Psoas muscle (tissue), 8 donors: ENCODE measurements at regions of chr3 and their contacts with region 1.

Region 1: DNA sequence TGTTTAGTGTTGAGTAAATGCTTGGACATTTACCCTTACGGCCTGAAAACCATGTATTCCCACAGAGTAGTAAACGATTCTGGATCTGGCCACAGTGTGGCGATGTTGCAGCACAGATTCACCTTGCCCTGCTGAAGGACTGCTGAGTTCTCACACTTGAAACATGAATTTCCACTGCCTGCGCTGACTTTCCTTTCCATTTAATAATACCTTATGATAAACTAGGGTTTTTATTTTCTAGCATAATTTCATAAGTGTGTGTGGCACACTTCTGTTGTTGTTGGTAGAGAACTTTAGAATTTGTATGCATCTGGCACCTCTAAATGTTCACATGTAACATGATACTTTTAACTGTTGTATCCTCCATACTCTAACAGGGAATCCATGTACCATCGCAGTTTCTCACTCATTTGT is 53.9 kb downstream of the C3orf38 start:
- DNase-seq: peak; percentile 42 to 73
- ATAC-seq: peak; percentile 74 to 92 (median 81)
- H3K4me3 ChIP-seq: no peak overlapping the region
- H3K27ac ChIP-seq: no peak overlapping the region
- H3K4me1 ChIP-seq: no peaks in the 10 kb centered on the region
- H3K27me3 ChIP-seq: no peaks in the 10 kb centered on the region
- CTCF ChIP-seq: peak; percentile 77

Region 2: GRCh38 chr3:87855616-87856015 is 348.0 kb before region 1 on chr3:
- intact Hi-C with region 1: no loop called
- DNase-seq: no peak
- ATAC-seq: no peak
- H3K4me3 ChIP-seq: no peak overlapping the region
- H3K27ac ChIP-seq: no peak overlapping the region
- H3K4me1 ChIP-seq: no peaks in the 10 kb centered on the region
- H3K27me3 ChIP-seq: no peaks in the 10 kb centered on the region
- CTCF ChIP-seq: no peak

Region 3: DNA sequence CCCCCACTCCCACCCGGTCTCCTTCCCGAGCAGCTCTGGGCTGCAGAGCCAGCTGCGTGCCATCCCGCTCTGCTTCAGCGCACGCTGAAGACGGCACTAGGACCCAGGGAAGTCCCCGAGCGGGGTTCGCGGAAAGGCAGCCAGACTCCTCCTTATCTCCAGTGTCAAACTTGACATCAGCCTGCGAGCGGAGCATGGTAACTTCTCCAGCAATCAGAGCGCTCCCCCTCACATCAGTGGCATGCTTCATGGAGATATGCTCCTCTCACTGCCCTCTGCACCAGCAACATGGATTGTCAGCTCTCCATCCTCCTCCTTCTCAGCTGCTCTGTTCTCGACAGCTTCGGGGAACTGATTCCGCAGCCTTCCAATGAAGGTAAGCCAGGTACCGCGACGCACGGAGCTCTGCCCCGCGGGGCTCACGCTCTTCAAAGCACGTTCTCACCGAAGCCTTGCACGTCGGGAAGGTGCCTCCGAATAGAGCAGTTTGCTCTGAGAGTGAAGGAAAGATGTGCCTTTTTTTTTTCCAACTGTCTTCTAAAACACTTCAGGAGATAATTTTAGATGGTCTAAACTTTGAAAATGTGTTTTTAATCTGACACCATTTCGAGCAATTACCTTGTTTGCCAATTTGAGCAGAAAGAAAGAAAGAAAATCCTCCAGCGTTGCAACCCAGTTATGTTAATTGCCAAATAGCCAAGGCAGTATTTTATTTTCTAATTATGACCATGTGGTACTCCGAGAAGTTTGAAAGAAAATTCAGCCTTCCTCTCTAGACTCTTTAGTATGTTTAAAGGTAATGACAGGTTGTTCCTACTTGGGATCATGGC is 904.0 kb after region 1 on chr3 and contains the start of gene EPHA3:
- intact Hi-C with region 1: loop called (anchors 10 kb)
- DNase-seq: peak; percentile 57 to 85
- ATAC-seq: peak; percentile 15 to 79 (median 62)
- H3K4me3 ChIP-seq: peak within 1 kb of the TSS; percentile 59
- H3K27ac ChIP-seq: no peak within 1 kb of the TSS
- H3K4me1 ChIP-seq: no peaks in the 10 kb centered on the region
- H3K27me3 ChIP-seq: peaks cover 0 to 21% (median 3%) of the 10 kb centered on the region in 3 donors
- CTCF ChIP-seq: no peak
- total RNA-seq, gene EPHA3: 0.40 to 2.4 (median 1.1) TPM

Region 4: DNA sequence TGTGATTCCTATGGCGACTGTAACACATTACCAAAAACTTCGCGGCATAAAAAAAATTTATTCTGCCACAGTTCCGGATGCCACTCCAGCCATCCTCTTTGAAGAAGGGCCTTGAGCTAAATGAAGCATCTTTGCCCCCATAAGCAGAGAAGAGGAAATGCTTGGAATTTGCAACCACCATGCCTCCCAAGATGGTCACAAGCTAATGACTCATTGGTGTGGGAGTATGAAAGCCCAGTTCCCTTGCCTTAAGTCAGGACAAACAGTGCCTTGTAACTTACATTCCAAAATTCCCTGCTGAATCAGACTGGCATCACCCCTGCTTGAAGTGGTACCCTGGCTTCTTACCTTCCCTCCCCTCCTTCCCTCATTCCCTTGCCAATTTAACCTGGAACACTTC is 1981.2 kb after region 1 on chr3:
- intact Hi-C with region 1: loop called (anchors 5 to 10 kb)
- DNase-seq: no peak
- ATAC-seq: no peak
- H3K4me3 ChIP-seq: no peak overlapping the region
- H3K27ac ChIP-seq: no peak overlapping the region
- H3K4me1 ChIP-seq: no peaks in the 10 kb centered on the region
- H3K27me3 ChIP-seq: no peaks in the 10 kb centered on the region
- CTCF ChIP-seq: no peak